ENCODE measurements at regions of chr14 and their contacts with region 1.

Region 1: GRCh38 chr14:45267071-45267470 is 14.1 kb upstream of the MIS18BP1 start:
- DNase-seq: no peak
- H3K4me3 ChIP-seq: no peak overlapping the region
- H3K4me3 Mint-ChIP-seq: no peak overlapping the region
- H3K27ac ChIP-seq: no peak overlapping the region
- H3K27ac Mint-ChIP-seq: no peak overlapping the region
- H3K4me1 ChIP-seq: no peaks in the 10 kb centered on the region
- H3K4me1 Mint-ChIP-seq: no peaks in the 10 kb centered on the region
- H3K27me3 ChIP-seq: no peaks in the 10 kb centered on the region
- H3K27me3 Mint-ChIP-seq: peaks cover 4 to 10% of the 10 kb centered on the region in 2 donors

Region 2: GRCh38 chr14:44846232-44846824 is 420.7 kb before region 1 on chr14:
- CTCF ChIA-PET with region 1: interaction called, 3 read pairs
- POLR2A ChIA-PET with region 1: no interaction called
- intact Hi-C with region 1: loop called (anchors 2 kb)
- DNase-seq: peak in 4 of 5 donors; percentile 30 to 43 (median 34)
- H3K4me3 ChIP-seq: no peak overlapping the region
- H3K4me3 Mint-ChIP-seq: peak overlapping the region in 1 of 8 donors; percentile 40
- H3K27ac ChIP-seq: no peak overlapping the region
- H3K27ac Mint-ChIP-seq: no peak overlapping the region
- H3K4me1 ChIP-seq: no peaks in the 10 kb centered on the region
- H3K4me1 Mint-ChIP-seq: peaks cover 0 to 4% (median 0%) of the 10 kb centered on the region in 4 donors
- H3K27me3 ChIP-seq: no peaks in the 10 kb centered on the region
- H3K27me3 Mint-ChIP-seq: peaks cover 0 to 2% of the 10 kb centered on the region in 2 donors

Region 3: DNA sequence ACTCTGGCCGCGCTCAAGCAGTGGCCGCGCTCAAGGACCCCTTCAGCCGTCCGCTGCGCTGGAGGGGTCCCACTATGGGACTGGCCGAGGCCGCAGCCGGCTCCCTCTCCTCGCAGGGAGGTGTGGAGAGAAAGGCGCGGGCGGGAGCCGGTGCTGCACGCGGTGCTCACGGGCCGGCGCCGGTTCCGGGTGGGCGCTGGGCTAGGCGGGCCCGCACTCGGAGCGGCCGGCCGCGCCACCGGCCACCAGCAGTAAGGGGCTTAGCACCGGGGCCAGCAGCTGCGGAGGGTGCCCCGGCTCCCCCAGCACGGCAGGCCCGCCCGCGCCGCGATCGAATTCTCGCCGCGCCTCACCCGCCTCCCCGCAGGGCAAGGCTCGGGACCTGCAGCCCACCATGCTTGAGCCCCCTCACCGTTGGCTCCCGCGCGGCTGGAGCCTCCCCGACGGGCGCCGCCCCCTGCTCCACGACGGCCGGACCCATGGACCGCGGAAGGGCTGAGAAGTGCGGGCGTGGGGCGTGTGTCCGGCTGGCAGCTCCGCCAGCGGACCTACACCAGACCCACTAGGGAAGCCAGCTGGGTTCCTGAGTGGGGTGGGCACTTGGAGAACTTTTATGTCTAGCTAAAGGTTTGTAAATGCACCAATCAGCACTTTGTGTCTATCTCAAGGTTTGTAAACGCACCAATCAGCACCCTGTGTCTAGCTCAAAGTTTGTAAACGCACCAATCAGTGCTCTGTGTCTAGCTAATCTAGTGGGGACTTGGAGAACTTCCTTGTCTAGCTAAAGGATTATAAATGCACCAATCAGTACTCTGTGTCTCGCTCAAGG is 354.8 kb before region 1 on chr14:
- CTCF ChIA-PET with region 1: interaction called, 33 read pairs
- POLR2A ChIA-PET with region 1: no interaction called
- intact Hi-C with region 1: loop called (anchors 1 kb)
- DNase-seq: no peak
- H3K4me3 ChIP-seq: no peak overlapping the region
- H3K4me3 Mint-ChIP-seq: peak overlapping the region in 4 of 8 donors; percentile 26 to 46 (median 31)
- H3K27ac ChIP-seq: no peak overlapping the region
- H3K27ac Mint-ChIP-seq: no peak overlapping the region
- H3K4me1 ChIP-seq: no peaks in the 10 kb centered on the region
- H3K4me1 Mint-ChIP-seq: peaks cover 4 to 10% (median 6%) of the 10 kb centered on the region in 4 donors
- H3K27me3 ChIP-seq: peaks cover 17% of the 10 kb centered on the region
- H3K27me3 Mint-ChIP-seq: peaks cover 22 to 30% of the 10 kb centered on the region in 2 donors

Region 4: GRCh38 chr14:45134051-45134958 is 132.8 kb before region 1 on chr14 and contains the start of gene FKBP3:
- CTCF ChIA-PET with region 1: interaction called, 8 read pairs
- POLR2A ChIA-PET with region 1: no interaction called
- intact Hi-C with region 1: loop called (anchors 1 kb)
- DNase-seq: peak; percentile 90 to 99 (median 96)
- H3K4me3 ChIP-seq: peak within 1 kb of the TSS; percentile 91 to 97
- H3K4me3 Mint-ChIP-seq: peak within 1 kb of the TSS; percentile 89 to 100 (median 98)
- H3K27ac ChIP-seq: peak within 1 kb of the TSS; percentile 91
- H3K27ac Mint-ChIP-seq: peak within 1 kb of the TSS; percentile 91 to 99 (median 97)
- H3K4me1 ChIP-seq: peaks cover 44% of the 10 kb centered on the region
- H3K4me1 Mint-ChIP-seq: peaks cover 26 to 62% (median 45%) of the 10 kb centered on the region in 4 donors
- H3K27me3 ChIP-seq: no peaks in the 10 kb centered on the region
- H3K27me3 Mint-ChIP-seq: no peaks in the 10 kb centered on the region
- total RNA-seq, gene FKBP3: 57.0 to 64.7 TPM

Region 5: DNA sequence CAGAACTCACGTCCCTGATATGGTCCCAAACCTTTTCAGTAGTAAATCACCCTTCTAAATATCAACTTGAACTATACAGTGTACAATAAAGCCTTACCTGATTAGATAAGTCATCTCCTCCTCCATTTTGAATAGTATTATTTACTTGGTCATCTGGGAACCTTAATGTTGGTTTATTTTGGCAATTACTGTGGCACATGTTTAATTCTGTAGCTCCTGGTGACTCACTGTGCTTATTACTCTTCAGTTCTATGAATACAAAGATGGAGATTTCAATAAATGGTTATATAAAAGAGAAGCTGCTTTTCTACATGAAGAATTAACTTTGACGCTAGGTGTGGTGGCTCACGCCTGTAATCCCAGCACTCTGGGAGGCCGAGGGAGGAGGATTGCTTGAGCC is 39.5 kb before region 1 on chr14:
- CTCF ChIA-PET with region 1: interaction called, 10 read pairs
- POLR2A ChIA-PET with region 1: no interaction called
- intact Hi-C with region 1: no loop called
- DNase-seq: no peak
- H3K4me3 ChIP-seq: no peak overlapping the region
- H3K4me3 Mint-ChIP-seq: no peak overlapping the region
- H3K27ac ChIP-seq: no peak overlapping the region
- H3K27ac Mint-ChIP-seq: no peak overlapping the region
- H3K4me1 ChIP-seq: no peaks in the 10 kb centered on the region
- H3K4me1 Mint-ChIP-seq: peaks cover 0 to 8% (median 6%) of the 10 kb centered on the region in 4 donors
- H3K27me3 ChIP-seq: no peaks in the 10 kb centered on the region
- H3K27me3 Mint-ChIP-seq: no peaks in the 10 kb centered on the region

Region 6: DNA sequence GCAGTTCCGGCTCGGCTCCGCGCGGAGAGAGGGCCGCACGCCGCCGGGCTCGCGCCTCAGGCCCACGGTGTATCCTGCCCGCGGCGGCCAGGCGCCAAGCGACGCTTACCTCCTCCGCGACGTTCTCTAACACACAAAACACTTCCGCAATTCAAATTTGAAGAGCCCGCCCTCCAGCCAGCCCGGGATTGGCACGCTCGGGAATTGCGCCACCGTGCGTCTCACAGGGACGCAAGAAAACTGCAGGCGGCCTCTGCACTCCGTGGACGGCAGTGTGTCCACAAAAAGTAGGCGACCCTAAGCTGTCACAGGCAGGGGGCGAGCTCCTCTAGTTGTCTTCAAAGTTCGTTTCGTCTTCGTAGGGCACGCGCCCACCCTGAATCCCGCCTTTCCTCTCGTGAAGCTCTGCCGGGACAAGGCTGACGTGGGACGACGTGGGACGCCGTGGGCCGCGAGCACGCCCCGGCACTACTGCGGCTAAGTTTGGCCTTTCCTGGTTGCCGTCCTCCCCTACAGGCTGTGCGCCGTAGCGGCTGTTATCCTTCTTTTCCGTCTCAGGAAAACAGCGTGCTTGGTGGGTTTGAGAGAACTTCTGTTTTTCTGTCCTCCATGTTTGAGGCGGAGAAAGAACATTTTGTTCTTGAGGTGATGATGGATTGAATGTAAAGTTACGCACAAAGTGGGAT is 13.9 kb before region 1 on chr14 and contains the start of gene MIS18BP1:
- CTCF ChIA-PET with region 1: interaction called, 37 read pairs
- POLR2A ChIA-PET with region 1: interaction called, 3 read pairs
- intact Hi-C with region 1: loop called (anchors 1 kb)
- DNase-seq: peak; percentile 92 to 95 (median 94)
- H3K4me3 ChIP-seq: peak within 1 kb of the TSS; percentile 83 to 93
- H3K4me3 Mint-ChIP-seq: peak within 1 kb of the TSS; percentile 91 to 97 (median 94)
- H3K27ac ChIP-seq: peak within 1 kb of the TSS; percentile 71
- H3K27ac Mint-ChIP-seq: peak within 1 kb of the TSS; percentile 94 to 97 (median 96)
- H3K4me1 ChIP-seq: peaks cover 42% of the 10 kb centered on the region
- H3K4me1 Mint-ChIP-seq: peaks cover 17 to 33% (median 25%) of the 10 kb centered on the region in 4 donors
- H3K27me3 ChIP-seq: no peaks in the 10 kb centered on the region
- H3K27me3 Mint-ChIP-seq: no peaks in the 10 kb centered on the region
- total RNA-seq, gene MIS18BP1: 30.6 to 31.2 TPM

Measured in CD4-positive, alpha-beta memory T cell (primary cell).